ENCODE measurements at regions of chr3 and their contacts with region 1.

Region 1: DNA sequence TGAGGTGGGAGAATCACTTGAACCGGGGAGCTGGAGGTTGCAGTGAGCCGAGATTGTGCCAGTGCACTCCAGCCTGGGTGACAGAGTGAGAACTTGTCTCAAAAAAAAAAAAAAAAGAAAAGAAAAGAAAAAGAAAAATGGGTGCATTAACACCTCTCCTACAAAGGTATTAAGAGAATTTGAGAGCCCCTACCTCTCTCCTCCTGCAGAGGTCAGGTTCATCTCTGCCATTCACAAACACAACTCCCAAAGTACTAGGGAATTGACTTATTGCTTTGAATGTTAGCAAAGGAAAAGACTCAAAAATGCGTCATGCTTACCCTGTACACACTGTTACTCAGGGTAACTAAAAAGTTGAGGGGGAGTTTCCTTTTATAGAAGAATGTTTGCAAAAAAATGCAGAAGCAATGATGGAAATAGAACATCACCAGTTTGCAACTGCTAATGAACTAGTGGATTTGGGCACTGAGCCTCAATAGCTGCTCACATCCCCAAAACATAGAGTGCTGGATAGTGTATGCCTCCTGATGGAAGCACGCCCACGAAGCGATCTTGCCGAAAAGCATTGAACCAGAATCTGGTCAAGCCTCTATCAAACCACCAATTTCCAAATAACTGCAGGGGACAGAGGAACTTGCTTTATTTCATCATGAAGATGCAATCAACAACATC is 15.5 kb upstream of the LYZL4 start:
- DNase-seq: no peak
- H3K4me3 ChIP-seq: no peak overlapping the region
- CTCF ChIP-seq: no peak

Region 2: DNA sequence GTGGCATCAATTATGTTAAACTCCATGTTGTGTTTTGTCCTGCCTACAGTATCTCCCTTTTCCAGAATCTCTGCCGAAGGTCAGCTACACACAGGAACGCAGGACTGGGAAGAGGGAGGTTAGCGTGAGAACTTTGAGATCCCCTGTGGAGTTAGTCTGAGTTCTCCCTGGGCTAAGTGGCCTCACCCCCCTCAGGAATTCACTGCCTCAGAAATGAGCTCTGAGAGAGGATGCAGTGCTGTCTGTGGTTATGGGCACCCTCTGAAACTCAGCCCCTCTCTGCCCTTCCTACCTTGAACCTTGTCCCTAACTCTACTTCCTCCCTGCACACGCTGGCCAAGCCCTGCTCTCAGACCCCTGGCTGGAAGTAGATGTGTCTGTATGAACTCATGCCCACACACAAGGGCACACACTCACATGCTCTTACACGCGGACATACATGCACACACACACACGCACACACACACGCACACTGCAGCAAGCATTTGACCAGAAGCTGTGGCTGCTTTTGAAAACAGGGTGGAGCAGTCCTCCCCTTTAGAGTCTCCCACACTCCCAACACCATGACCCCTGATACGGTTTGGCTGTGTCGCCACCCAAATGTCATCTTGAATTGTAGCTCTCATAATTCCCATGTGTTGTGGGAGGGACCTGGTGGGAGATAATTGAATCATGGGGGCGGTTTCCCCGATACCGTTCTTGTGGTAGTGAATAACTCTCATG is 71.3 kb after region 1 on chr3:
- in situ Hi-C with region 1: no loop called
- DNase-seq: peak; percentile 79
- H3K4me3 ChIP-seq: no peak overlapping the region
- CTCF ChIP-seq: no peak

Region 3: GRCh38 chr3:42510325-42510724 is 84.5 kb after region 1 on chr3:
- in situ Hi-C with region 1: loop called (anchors 5 kb)
- DNase-seq: no peak
- H3K4me3 ChIP-seq: no peak overlapping the region
- CTCF ChIP-seq: no peak